ENCODE measurements at regions of chr11 and their contacts with region 1.

Region 1: GRCh38 chr11:69131644-69132300 is 24.0 kb upstream of the SMIM38 start:
- DNase-seq: peak; percentile 78
- H3K4me3 ChIP-seq: no peak overlapping the region
- H3K27ac ChIP-seq: no peak overlapping the region
- H3K4me1 ChIP-seq: peaks cover 4% of the 10 kb centered on the region
- H3K27me3 ChIP-seq: no peaks in the 10 kb centered on the region
- CTCF ChIP-seq: peak; percentile 90 to 94

Region 2: GRCh38 chr11:69240332-69241074 is 108.7 kb after region 1 on chr11:
- CTCF ChIA-PET with region 1: interaction called, 5 read pairs
- dilution Hi-C with region 1: no loop called
- in situ Hi-C with region 1: no loop called
- intact Hi-C with region 1: loop called (anchors 1 kb)
- DNase-seq: peak; percentile 10
- H3K4me3 ChIP-seq: no peak overlapping the region
- H3K27ac ChIP-seq: no peak overlapping the region
- H3K4me1 ChIP-seq: no peaks in the 10 kb centered on the region
- H3K27me3 ChIP-seq: no peaks in the 10 kb centered on the region
- CTCF ChIP-seq: peak; percentile 45 to 65

Region 3: GRCh38 chr11:69280994-69281393 is 149.2 kb after region 1 on chr11:
- CTCF ChIA-PET with region 1: no interaction called
- dilution Hi-C with region 1: no loop called
- in situ Hi-C with region 1: loop called in 1 of 2 experiments (anchors 10 kb)
- intact Hi-C with region 1: loop called (anchors 5 kb)
- DNase-seq: peak; percentile 96
- H3K4me3 ChIP-seq: no peak overlapping the region
- H3K27ac ChIP-seq: peak overlapping the region; percentile 93
- H3K4me1 ChIP-seq: peaks cover 28% of the 10 kb centered on the region
- H3K27me3 ChIP-seq: no peaks in the 10 kb centered on the region
- CTCF ChIP-seq: no peak

Region 4: DNA sequence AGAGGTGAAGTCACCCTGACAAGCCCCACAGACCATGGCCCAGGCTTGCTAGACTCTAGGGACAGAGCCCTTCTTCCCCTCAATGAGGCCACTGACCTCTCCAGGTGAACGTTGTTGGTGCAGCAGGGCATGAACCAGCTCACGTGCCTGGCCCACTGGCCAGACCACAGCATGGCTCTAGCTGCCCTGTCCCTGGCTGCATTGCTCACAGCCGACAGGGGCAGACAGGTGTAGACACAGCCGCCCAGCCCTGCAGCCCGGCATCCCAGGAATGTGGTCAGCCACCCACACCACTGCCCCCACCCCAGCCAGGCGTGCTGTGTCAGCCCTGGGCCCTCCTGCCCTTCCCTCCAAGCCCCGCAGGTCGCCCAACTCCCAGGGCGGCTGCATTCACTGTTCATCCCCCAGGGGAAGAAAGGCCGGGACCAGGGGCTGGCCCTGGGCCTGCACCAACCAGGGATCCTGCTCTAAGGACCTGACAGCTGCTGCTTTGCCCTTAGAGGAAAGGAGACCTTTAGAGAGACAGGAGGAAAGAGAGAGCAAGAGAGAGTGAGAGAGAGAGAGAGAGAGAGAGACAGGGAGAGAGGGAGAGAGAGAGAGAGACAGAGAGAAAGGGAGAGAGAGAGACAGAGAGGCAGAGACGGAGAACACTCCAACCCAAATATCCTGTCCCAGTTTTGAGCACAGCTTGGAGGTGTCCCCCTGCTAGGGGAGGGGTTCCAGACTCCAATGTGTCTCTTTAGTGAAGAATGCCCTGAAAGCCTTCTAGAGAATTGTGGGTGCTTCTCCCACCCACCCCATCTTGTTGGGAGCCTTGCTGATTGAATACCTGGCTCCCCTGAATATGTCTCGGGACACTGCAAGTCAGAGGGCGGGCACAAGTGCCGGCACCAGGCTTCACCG is 305.5 kb after region 1 on chr11:
- CTCF ChIA-PET with region 1: no interaction called
- dilution Hi-C with region 1: no loop called
- in situ Hi-C with region 1: no loop called
- intact Hi-C with region 1: loop called (anchors 1 kb)
- DNase-seq: peak; percentile 82
- H3K4me3 ChIP-seq: no peak overlapping the region
- H3K27ac ChIP-seq: peak overlapping the region; percentile 60
- H3K4me1 ChIP-seq: peaks cover 47% of the 10 kb centered on the region
- H3K27me3 ChIP-seq: no peaks in the 10 kb centered on the region
- CTCF ChIP-seq: peak in 1 of 2 donors; percentile 30

Region 5: GRCh38 chr11:69463181-69463994 is 331.6 kb after region 1 on chr11:
- CTCF ChIA-PET with region 1: no interaction called
- dilution Hi-C with region 1: no loop called
- in situ Hi-C with region 1: no loop called
- intact Hi-C with region 1: loop called (anchors 5 kb)
- DNase-seq: no peak
- H3K4me3 ChIP-seq: no peak overlapping the region
- H3K27ac ChIP-seq: no peak overlapping the region
- H3K4me1 ChIP-seq: peaks cover 12% of the 10 kb centered on the region
- H3K27me3 ChIP-seq: no peaks in the 10 kb centered on the region
- CTCF ChIP-seq: no peak

Region 6: DNA sequence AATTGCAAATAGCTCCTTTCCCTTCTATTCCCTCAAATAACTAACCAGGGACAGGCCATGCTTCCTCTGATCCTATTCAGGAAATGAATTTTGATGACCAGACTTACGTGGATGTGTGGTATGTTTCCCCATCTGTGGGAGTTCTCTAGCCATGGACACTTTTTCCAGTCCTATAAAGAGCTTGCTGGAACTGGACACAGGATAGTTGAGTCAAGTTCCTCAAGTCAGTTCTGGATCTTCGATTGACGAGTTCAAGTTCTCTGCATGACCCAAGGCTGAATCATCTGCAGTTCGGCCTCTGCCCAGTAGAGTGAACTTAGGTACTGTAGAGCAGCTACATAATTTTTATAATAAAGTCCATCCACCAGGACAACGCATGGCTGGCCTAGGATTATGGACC is 456.5 kb after region 1 on chr11:
- CTCF ChIA-PET with region 1: no interaction called
- dilution Hi-C with region 1: no loop called
- in situ Hi-C with region 1: no loop called
- intact Hi-C with region 1: loop called (anchors 2 kb)
- DNase-seq: peak; percentile 83
- H3K4me3 ChIP-seq: no peak overlapping the region
- H3K27ac ChIP-seq: peak overlapping the region; percentile 83
- H3K4me1 ChIP-seq: peaks cover 18% of the 10 kb centered on the region
- H3K27me3 ChIP-seq: no peaks in the 10 kb centered on the region
- CTCF ChIP-seq: peak; percentile 51 to 70